ENCODE measurements at regions of chr1 and their contacts with region 1.

Region 1: DNA sequence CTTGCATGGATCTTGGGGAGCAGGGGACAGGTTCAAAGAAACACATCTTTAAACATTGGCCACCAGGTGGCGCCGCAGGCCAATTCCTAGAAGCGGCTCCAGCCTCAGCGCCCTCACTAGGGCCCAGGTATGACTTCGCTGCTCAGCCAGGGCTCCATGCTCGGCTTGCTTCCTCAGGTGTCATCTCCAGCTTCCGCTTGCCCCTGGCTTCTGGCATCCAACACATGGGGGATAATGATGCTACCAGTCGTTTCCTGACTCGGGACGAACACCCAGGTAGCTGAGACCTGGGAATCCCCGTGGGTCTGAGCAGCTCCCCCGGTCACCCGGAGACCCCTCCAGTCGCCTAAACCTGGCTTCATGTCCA is 8.5 kb upstream of the MEX3A start:
- DNase-seq: peak; percentile 71
- H3K4me3 ChIP-seq: no peak overlapping the region
- H3K27ac ChIP-seq: no peak overlapping the region
- H3K4me1 ChIP-seq: peaks cover 4% of the 10 kb centered on the region
- H3K27me3 ChIP-seq: no peaks in the 10 kb centered on the region
- CTCF ChIP-seq: peak; percentile 57 to 81

Region 2: GRCh38 chr1:156129706-156130581 is 39.1 kb after region 1 on chr1:
- CTCF ChIA-PET with region 1: interaction called, 7 read pairs
- dilution Hi-C with region 1: no loop called
- in situ Hi-C with region 1: loop called (anchors 5 kb)
- intact Hi-C with region 1: loop called (anchors 1 kb)
- DNase-seq: peak; percentile 96
- H3K4me3 ChIP-seq: no peak overlapping the region
- H3K27ac ChIP-seq: peak overlapping the region; percentile 95
- H3K4me1 ChIP-seq: peaks cover 54% of the 10 kb centered on the region
- H3K27me3 ChIP-seq: no peaks in the 10 kb centered on the region
- CTCF ChIP-seq: peak; percentile 96 to 97

Region 3: GRCh38 chr1:156146020-156146768 is 55.4 kb after region 1 on chr1:
- CTCF ChIA-PET with region 1: interaction called, 3 read pairs
- dilution Hi-C with region 1: no loop called
- in situ Hi-C with region 1: no loop called
- intact Hi-C with region 1: loop called (anchors 2 kb)
- DNase-seq: peak; percentile 93
- H3K4me3 ChIP-seq: no peak overlapping the region
- H3K27ac ChIP-seq: no peak overlapping the region
- H3K4me1 ChIP-seq: peaks cover 10% of the 10 kb centered on the region
- H3K27me3 ChIP-seq: no peaks in the 10 kb centered on the region
- CTCF ChIP-seq: peak; percentile 67 to 74

Region 4: DNA sequence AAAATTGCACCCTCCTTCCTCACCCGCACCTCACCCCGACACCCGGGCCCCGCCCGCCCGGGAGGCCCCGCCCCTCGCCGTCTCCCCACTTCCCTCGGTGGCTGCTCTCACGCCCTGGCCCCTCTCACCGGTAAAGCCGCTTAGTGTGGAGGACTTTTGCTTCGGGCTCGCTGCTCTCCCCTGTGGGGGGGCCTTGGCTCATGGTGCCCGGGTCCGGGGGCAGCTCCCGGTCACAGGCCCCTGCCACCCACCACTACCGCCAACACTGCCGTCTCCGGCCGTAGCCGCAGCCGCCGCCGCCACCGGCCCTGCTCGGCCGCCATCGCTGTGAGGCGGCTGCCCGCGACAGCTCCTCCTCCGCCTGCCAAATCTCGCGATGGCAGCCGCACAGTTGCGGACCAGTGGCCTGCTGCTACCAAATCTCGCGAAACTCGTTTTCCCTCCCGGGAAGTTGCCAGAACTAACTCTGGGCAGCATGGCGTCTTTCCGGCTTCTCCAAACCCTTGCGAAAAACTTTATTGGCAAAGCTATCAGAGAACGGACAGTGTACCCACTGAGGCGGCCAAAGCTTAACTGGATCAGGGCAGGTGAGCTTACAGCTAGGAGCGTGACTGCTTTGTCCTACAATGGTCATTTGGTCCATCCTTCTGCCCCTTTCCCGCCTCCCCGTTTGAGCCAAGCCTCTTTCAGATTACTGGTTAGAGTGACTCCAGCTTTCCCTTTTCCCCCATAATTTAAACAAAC is 191.8 kb after region 1 on chr1 and contains the start of gene SMG5:
- CTCF ChIA-PET with region 1: no interaction called
- dilution Hi-C with region 1: no loop called
- in situ Hi-C with region 1: no loop called
- intact Hi-C with region 1: loop called (anchors 5 kb)
- DNase-seq: peak; percentile 98
- H3K4me3 ChIP-seq: peak within 1 kb of the TSS; percentile 73 to 93 (median 86)
- H3K27ac ChIP-seq: peak within 1 kb of the TSS; percentile 68
- H3K4me1 ChIP-seq: peaks cover 38% of the 10 kb centered on the region
- H3K27me3 ChIP-seq: no peaks in the 10 kb centered on the region
- CTCF ChIP-seq: no peak
- total RNA-seq, gene SMG5: 74.5 to 76.7 TPM

Region 5: GRCh38 chr1:156319664-156320063 is 228.9 kb after region 1 on chr1:
- CTCF ChIA-PET with region 1: no interaction called
- dilution Hi-C with region 1: no loop called
- in situ Hi-C with region 1: no loop called
- intact Hi-C with region 1: loop called (anchors 2 kb)
- DNase-seq: no peak
- H3K4me3 ChIP-seq: no peak overlapping the region
- H3K27ac ChIP-seq: no peak overlapping the region
- H3K4me1 ChIP-seq: no peaks in the 10 kb centered on the region
- H3K27me3 ChIP-seq: no peaks in the 10 kb centered on the region
- CTCF ChIP-seq: peak; percentile 37 to 49

Region 6: DNA sequence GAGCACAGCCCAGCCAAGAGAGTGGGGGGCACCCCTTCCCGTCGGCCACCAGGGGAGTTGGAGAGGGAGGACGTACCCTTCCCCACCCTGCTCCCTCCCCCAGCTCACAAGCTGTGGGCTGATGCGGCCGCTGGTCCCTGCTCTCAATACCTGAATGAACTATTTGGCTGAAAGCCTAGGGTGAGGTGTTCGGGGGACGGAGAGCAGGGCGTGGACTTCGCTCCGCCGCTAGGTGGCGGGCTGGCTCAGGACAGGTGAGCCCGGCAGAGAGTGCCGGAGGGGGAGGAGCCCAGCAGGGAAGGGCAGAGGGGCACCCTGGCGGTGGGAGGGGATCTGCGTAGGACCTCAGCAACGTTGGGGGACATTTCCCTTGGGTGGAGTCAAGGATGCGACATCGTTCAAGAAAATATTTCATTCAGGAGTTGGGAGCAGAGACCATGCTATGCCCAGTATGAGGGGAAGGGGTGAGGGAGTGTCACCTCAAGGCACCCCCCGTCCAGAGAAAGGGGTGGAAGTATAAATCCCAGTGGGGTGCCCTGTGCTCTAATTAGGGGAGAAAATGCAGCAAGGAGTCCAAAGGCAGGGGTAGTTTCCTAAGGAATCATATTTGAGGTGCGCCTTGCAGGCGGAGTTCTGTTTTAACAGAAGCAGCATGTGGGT is 266.2 kb after region 1 on chr1:
- CTCF ChIA-PET with region 1: no interaction called
- dilution Hi-C with region 1: no loop called
- in situ Hi-C with region 1: no loop called
- intact Hi-C with region 1: loop called (anchors 1 kb)
- DNase-seq: peak; percentile 61
- H3K4me3 ChIP-seq: no peak overlapping the region
- H3K27ac ChIP-seq: no peak overlapping the region
- H3K4me1 ChIP-seq: peaks cover 6% of the 10 kb centered on the region
- H3K27me3 ChIP-seq: no peaks in the 10 kb centered on the region
- CTCF ChIP-seq: peak; percentile 87 to 96

Region 7: DNA sequence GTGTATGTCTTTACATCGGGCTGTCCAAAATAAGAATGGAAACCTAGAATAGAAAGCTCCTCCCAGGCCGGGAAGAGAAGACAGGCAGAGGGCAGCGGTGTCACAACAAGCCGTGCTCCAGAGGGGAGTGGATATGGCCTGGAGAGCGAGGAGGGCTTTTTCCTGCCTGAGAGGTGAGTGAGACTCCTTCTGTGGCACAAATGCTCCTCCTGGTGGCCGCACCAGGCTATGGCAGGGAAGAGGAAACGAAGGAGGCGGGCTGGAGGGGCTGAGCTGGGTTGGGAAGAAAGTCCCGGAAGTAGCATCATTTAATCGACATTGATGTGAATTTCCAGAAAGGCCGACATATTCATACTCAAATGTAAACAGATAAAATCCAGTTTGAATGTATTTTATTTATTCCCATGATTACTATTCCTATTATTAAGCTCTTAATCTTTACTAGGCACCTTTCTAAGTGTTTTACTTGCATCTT is 355.0 kb after region 1 on chr1:
- CTCF ChIA-PET with region 1: no interaction called
- dilution Hi-C with region 1: no loop called
- in situ Hi-C with region 1: no loop called
- intact Hi-C with region 1: loop called (anchors 1 kb)
- DNase-seq: peak; percentile 73
- H3K4me3 ChIP-seq: no peak overlapping the region
- H3K27ac ChIP-seq: no peak overlapping the region
- H3K4me1 ChIP-seq: peaks cover 4% of the 10 kb centered on the region
- H3K27me3 ChIP-seq: no peaks in the 10 kb centered on the region
- CTCF ChIP-seq: peak; percentile 98 to 99

Measured in mammary epithelial cell (primary cell).